ENCODE measurements at regions of chr3 and their contacts with region 1.

Region 1: GRCh38 chr3:164687211-164687610 is 391.1 kb downstream of the SI start:
- DNase-seq: no peak
- ATAC-seq: peak; percentile 45

Region 2: GRCh38 chr3:165749821-165750220 is 1062.6 kb after region 1 on chr3:
- intact Hi-C with region 1: loop called (anchors 5 kb)
- DNase-seq: no peak
- ATAC-seq: no peak

Region 3: DNA sequence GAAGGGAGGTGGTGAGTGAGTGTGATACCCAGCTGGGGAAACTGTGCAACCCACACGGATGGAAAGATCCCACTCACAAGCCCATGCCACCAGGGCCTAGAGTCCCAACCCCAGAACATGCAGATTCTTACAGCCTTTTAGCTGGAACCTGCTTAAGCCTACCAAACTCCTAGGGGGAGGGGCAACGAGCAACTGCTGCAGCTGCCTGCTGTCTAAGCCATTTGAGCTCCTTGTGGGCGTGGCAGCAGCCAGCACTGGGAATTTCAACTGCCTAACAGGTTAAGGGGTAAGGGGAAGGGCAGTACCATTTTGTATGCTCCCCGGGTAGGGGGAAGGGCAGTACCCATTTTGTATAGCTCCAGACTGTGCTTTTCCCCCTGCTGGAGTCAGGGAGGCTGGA is 1823.2 kb after region 1 on chr3:
- intact Hi-C with region 1: no loop called
- DNase-seq: no peak
- ATAC-seq: no peak